ENCODE measurements at regions of chr13 and their contacts with region 1.

Region 1: GRCh38 chr13:30572859-30573275 is 44.9 kb upstream of the USPL1 start:
- DNase-seq: no peak
- H3K4me3 ChIP-seq: peak overlapping the region in 3 of 4 donors; percentile 19 to 36 (median 19)
- H3K27ac ChIP-seq: peak overlapping the region; percentile 4 to 73 (median 40)
- H3K4me1 ChIP-seq: peaks cover 0 to 20% (median 7%) of the 10 kb centered on the region in 4 donors
- H3K27me3 ChIP-seq: no peaks in the 10 kb centered on the region
- CTCF ChIP-seq: peak in 2 of 5 experiments; percentile 17 to 19
- EP300 ChIP-seq: no peak
- POLR2A ChIP-seq: no peak

Region 2: GRCh38 chr13:30523211-30523610 is 49.7 kb before region 1 on chr13:
- in situ Hi-C with region 1: no loop called
- intact Hi-C with region 1: loop called (anchors 2 kb)
- DNase-seq: no peak
- H3K4me3 ChIP-seq: no peak overlapping the region
- H3K27ac ChIP-seq: no peak overlapping the region
- H3K4me1 ChIP-seq: no peaks in the 10 kb centered on the region
- H3K27me3 ChIP-seq: no peaks in the 10 kb centered on the region
- CTCF ChIP-seq: no peak
- EP300 ChIP-seq: no peak
- POLR2A ChIP-seq: no peak

Region 3: GRCh38 chr13:30561511-30561910 is 11.4 kb before region 1 on chr13:
- in situ Hi-C with region 1: no loop called
- intact Hi-C with region 1: no loop called
- DNase-seq: no peak
- H3K4me3 ChIP-seq: no peak overlapping the region
- H3K27ac ChIP-seq: no peak overlapping the region
- H3K4me1 ChIP-seq: no peaks in the 10 kb centered on the region
- H3K27me3 ChIP-seq: no peaks in the 10 kb centered on the region
- CTCF ChIP-seq: no peak
- EP300 ChIP-seq: no peak
- POLR2A ChIP-seq: no peak

Measured in transverse colon (tissue), 4 donors.